ENCODE measurements at regions of chr3 and their contacts with region 1.

Region 1: GRCh38 chr3:118817748-118818165 is 216.9 kb downstream of the IGSF11 start:
- DNase-seq: peak; percentile 76
- H3K4me3 Mint-ChIP-seq: no peak overlapping the region
- H3K27ac Mint-ChIP-seq: peak overlapping the region; percentile 36
- H3K4me1 Mint-ChIP-seq: peaks cover 17% of the 10 kb centered on the region
- H3K27me3 Mint-ChIP-seq: no peaks in the 10 kb centered on the region
- CTCF ChIP-seq: peak; percentile 70

Region 2: GRCh38 chr3:117019082-117019713 is 1798.6 kb before region 1 on chr3:
- CTCF ChIA-PET with region 1: interaction called, 3 read pairs
- POLR2A ChIA-PET with region 1: interaction called, 4 read pairs
- intact Hi-C with region 1: loop called (anchors 5 kb)
- DNase-seq: peak; percentile 60
- H3K4me3 Mint-ChIP-seq: no peak overlapping the region
- H3K27ac Mint-ChIP-seq: no peak overlapping the region
- H3K4me1 Mint-ChIP-seq: no peaks in the 10 kb centered on the region
- H3K27me3 Mint-ChIP-seq: peaks cover 83% of the 10 kb centered on the region
- CTCF ChIP-seq: peak; percentile 74

Region 3: GRCh38 chr3:117059067-117059955 is 1758.4 kb before region 1 on chr3:
- CTCF ChIA-PET with region 1: no interaction called
- POLR2A ChIA-PET with region 1: no interaction called
- intact Hi-C with region 1: loop called (anchors 10 kb)
- DNase-seq: peak; percentile 19
- H3K4me3 Mint-ChIP-seq: no peak overlapping the region
- H3K27ac Mint-ChIP-seq: no peak overlapping the region
- H3K4me1 Mint-ChIP-seq: no peaks in the 10 kb centered on the region
- H3K27me3 Mint-ChIP-seq: peaks cover 44% of the 10 kb centered on the region
- CTCF ChIP-seq: peak; percentile 44

Region 4: GRCh38 chr3:118102737-118103136 is 715.0 kb before region 1 on chr3:
- CTCF ChIA-PET with region 1: no interaction called
- POLR2A ChIA-PET with region 1: no interaction called
- intact Hi-C with region 1: loop called (anchors 10 kb)
- DNase-seq: peak; percentile 47
- H3K4me3 Mint-ChIP-seq: no peak overlapping the region
- H3K27ac Mint-ChIP-seq: no peak overlapping the region
- H3K4me1 Mint-ChIP-seq: peaks cover 16% of the 10 kb centered on the region
- H3K27me3 Mint-ChIP-seq: no peaks in the 10 kb centered on the region
- CTCF ChIP-seq: no peak

Region 5: DNA sequence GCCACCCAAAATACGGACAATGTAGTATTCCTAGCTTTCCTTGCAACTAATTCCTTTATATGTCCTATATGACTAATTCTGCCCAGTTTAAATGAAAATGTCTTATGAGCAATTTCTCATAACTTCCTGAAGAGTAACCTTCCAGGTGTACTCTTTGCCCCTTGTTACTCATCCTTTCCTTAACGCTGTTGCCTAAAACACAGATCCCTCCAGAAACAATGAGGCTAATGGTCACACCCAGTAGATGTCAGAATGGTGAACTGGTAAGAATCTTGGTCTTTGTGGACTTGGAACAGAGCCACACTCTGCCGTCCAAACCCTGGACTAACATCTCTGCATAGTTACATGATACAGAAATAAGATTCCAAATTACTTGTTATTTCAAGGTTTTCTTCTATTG is 281.0 kb before region 1 on chr3:
- CTCF ChIA-PET with region 1: no interaction called
- POLR2A ChIA-PET with region 1: no interaction called
- intact Hi-C with region 1: loop called (anchors 10 kb)
- DNase-seq: peak; percentile 79
- H3K4me3 Mint-ChIP-seq: no peak overlapping the region
- H3K27ac Mint-ChIP-seq: no peak overlapping the region
- H3K4me1 Mint-ChIP-seq: peaks cover 16% of the 10 kb centered on the region
- H3K27me3 Mint-ChIP-seq: no peaks in the 10 kb centered on the region
- CTCF ChIP-seq: no peak

Region 6: DNA sequence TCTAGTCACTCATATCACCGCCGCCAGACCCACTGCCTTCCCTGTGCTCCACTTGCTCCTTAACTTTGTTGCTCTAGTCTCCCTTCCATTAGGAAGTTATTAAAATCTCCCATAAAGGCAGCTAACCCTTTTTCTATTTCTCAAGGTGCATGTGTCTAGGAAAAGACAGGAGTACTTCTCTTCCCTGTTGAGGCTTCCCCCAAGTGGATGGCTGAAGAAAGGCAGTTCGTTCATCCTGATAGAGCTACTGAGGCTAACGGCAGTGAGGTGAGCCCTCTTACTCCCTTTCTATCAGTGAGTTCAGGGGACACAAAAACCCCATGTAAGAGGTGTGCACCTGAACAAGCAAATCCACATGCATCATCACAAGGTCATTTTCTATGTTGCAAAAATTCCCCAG is 180.9 kb before region 1 on chr3:
- CTCF ChIA-PET with region 1: interaction called, 7 read pairs
- POLR2A ChIA-PET with region 1: no interaction called
- intact Hi-C with region 1: loop called (anchors 1 kb)
- DNase-seq: peak; percentile 45
- H3K4me3 Mint-ChIP-seq: no peak overlapping the region
- H3K27ac Mint-ChIP-seq: no peak overlapping the region
- H3K4me1 Mint-ChIP-seq: peaks cover 11% of the 10 kb centered on the region
- H3K27me3 Mint-ChIP-seq: no peaks in the 10 kb centered on the region
- CTCF ChIP-seq: peak; percentile 32

Measured in MCF 10A (cell line).